Sigmoid colon (tissue), 7 donors: ENCODE measurements at regions of chr2 and their contacts with region 1.

Region 1: GRCh38 chr2:96739633-96740428 is at the start of gene LMAN2L:
- DNase-seq: peak; percentile 99
- H3K4me3 ChIP-seq: peak within 1 kb of the TSS; percentile 47 to 95 (median 74)
- H3K27ac ChIP-seq: peak within 1 kb of the TSS; percentile 73 to 84 (median 78)
- H3K4me1 ChIP-seq: peaks cover 0 to 35% (median 19%) of the 10 kb centered on the region in 4 donors
- H3K27me3 ChIP-seq: no peaks in the 10 kb centered on the region
- CTCF ChIP-seq: no peak
- EP300 ChIP-seq: no peak
- POLR2A ChIP-seq: peak; percentile 26 to 48
- total RNA-seq, gene LMAN2L: 11.9 to 23.2 (median 17.2) TPM

Region 2: DNA sequence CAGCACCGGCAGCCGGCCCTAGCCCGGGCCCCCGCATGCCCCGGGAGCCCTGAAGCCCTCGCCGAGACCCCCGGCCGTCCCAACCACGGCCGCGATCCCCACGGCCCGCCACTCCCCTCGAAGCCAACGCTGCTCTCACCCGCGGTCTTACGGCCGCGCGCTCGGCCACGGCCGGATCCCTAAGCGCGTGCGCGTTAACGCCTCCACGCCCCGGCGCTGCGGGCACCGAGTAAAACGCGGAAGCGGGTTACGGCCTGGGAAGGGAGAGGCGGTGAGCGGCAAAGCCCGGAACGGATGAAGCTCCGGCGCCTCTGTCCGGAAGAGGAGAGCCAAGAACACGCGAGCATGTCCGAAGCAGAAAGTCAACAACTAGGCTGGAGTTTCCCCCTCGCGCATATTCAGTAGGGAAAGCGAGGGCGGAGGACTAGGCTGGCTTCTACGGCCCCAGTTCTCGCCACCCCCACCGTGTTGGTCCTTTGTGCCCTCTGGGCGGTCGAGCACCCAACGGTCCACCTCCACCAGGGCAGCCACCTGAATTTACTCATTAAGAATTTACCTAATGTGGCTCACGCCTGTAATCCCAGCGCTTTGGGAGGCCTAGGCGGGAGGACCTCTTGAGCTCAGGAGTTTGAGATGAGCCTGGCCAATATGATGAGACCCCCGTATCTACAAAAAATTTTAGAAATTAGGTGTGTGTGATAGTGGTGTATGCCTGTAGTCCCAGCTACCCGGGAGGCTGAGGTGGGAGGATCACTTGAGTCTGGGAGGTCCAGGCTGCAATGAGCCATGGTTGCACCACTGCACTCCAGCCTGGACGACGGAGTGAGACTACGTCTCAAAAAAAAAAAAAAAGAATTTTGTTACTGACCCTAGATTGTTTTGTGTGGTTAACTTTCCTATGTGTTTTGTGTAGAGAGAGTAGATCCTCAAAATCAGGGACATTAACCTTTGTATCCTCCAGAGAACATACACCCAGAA is 101.4 kb before region 1 on chr2 and contains the start of gene KANSL3:
- intact Hi-C with region 1: loop called (anchors 2 kb)
- DNase-seq: peak; percentile 96
- H3K4me3 ChIP-seq: peak within 1 kb of the TSS; percentile 65 to 76 (median 72)
- H3K27ac ChIP-seq: peak within 1 kb of the TSS; percentile 92 to 98 (median 92)
- H3K4me1 ChIP-seq: peaks cover 3 to 38% (median 29%) of the 10 kb centered on the region in 4 donors
- H3K27me3 ChIP-seq: no peaks in the 10 kb centered on the region
- CTCF ChIP-seq: no peak
- EP300 ChIP-seq: peak in 1 of 4 donors; percentile 63
- POLR2A ChIP-seq: peak; percentile 76 to 85
- total RNA-seq, gene KANSL3: 35.4 to 55.0 (median 47.7) TPM

Region 3: DNA sequence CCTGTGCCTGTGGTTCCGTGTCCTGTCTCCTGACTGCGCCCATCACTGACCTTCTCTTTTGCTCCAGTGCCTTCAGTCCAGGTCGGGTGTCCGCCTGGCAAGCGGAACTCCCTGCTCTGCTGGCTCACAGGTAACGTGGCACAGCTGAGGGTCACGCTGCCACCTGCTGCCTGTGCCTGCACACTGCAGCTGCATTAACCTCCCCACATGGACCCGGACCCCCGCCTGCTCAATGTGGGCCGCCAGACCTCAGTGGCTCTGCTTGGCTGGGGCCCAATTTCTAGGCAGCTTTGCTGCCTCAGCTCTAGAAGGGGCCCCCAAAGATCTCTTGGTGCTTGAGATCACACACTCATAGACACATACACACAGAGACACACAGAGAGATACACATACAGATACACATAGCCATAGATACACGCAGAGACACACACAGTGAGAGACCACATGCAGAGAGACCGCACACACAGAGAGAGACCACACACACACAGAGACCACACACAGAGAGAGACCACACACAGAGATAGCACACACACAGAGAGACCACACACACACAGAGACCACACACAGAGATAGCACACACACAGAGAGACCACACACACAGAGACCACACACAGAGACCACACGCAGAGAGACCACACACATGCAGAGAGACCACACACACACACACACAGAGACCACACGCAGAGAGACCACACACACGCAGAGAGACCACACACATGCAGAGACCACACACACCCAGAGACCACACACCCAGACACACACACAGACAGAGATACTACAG is 61.4 kb after region 1 on chr2:
- intact Hi-C with region 1: loop called (anchors 5 kb)
- DNase-seq: peak; percentile 85
- H3K4me3 ChIP-seq: no peak overlapping the region
- H3K27ac ChIP-seq: no peak overlapping the region
- H3K4me1 ChIP-seq: peaks cover 0 to 8% (median 7%) of the 10 kb centered on the region in 4 donors
- H3K27me3 ChIP-seq: no peaks in the 10 kb centered on the region
- CTCF ChIP-seq: peak; percentile 80 to 94 (median 91)
- EP300 ChIP-seq: no peak
- POLR2A ChIP-seq: no peak

Region 4: DNA sequence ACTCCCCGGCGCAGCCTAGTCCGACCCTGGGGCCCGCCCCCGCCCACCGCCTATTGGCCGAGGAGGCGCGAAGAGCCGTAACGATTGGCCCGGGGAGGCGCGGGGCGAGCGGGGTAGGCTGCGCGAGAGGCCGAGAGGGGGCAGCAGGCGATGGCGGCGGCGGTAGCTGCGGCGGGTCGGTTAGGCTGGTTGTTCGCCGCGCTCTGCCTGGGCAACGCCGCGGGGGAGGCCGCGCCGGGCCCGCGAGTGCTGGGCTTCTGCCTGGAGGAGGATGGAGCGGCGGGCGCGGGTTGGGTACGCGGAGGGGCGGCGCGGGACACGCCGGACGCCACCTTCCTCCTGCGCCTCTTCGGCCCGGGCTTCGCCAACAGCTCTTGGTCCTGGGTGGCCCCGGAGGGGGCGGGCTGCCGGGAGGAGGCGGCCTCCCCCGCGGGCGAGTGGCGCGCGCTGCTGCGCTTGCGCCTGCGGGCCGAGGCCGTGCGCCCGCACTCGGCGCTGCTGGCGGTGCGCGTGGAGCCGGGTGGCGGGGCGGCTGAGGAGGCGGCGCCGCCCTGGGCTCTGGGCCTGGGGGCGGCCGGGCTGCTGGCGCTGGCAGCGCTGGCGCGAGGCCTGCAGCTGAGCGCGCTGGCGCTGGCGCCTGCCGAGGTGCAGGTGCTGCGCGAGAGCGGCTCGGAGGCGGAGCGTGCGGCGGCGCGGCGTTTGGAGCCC is 76.5 kb after region 1 on chr2 and contains the start of gene CNNM3:
- intact Hi-C with region 1: loop called (anchors 5 kb)
- DNase-seq: peak; percentile 98
- H3K4me3 ChIP-seq: peak within 1 kb of the TSS; percentile 60 to 88 (median 68)
- H3K27ac ChIP-seq: peak within 1 kb of the TSS; percentile 85 to 96 (median 96)
- H3K4me1 ChIP-seq: peaks cover 0 to 55% (median 45%) of the 10 kb centered on the region in 4 donors
- H3K27me3 ChIP-seq: no peaks in the 10 kb centered on the region
- CTCF ChIP-seq: peak; percentile 31 to 77 (median 63)
- EP300 ChIP-seq: no peak
- POLR2A ChIP-seq: peak in 1 of 2 donors; percentile 46
- total RNA-seq, gene CNNM3: 8.9 to 16.6 (median 11.8) TPM

Region 5: GRCh38 chr2:96960153-96960961 is 220.5 kb after region 1 on chr2:
- intact Hi-C with region 1: loop called (anchors 5 kb)
- DNase-seq: peak; percentile 95
- H3K4me3 ChIP-seq: no peak overlapping the region
- H3K27ac ChIP-seq: no peak overlapping the region
- H3K4me1 ChIP-seq: peaks cover 0 to 15% (median 7%) of the 10 kb centered on the region in 4 donors
- H3K27me3 ChIP-seq: no peaks in the 10 kb centered on the region
- CTCF ChIP-seq: peak; percentile 91 to 96 (median 94)
- EP300 ChIP-seq: no peak
- POLR2A ChIP-seq: no peak